Posterior cingulate gyrus (tissue), 11 donors: ENCODE measurements at regions of chr22 and their contacts with region 1.

Region 1: GRCh38 chr22:49999063-49999945 is 13.3 kb downstream of the IL17REL start:
- DNase-seq: peak in 2 of 10 donors; percentile 42 to 80

Region 2: GRCh38 chr22:49753961-49754695 is 245.2 kb before region 1 on chr22:
- intact Hi-C with region 1: no loop called
- DNase-seq: peak in 1 of 10 donors; percentile 65

Region 3: GRCh38 chr22:49790912-49791311 is 208.4 kb before region 1 on chr22:
- intact Hi-C with region 1: no loop called
- DNase-seq: peak in 1 of 10 donors; percentile 77

Region 4: DNA sequence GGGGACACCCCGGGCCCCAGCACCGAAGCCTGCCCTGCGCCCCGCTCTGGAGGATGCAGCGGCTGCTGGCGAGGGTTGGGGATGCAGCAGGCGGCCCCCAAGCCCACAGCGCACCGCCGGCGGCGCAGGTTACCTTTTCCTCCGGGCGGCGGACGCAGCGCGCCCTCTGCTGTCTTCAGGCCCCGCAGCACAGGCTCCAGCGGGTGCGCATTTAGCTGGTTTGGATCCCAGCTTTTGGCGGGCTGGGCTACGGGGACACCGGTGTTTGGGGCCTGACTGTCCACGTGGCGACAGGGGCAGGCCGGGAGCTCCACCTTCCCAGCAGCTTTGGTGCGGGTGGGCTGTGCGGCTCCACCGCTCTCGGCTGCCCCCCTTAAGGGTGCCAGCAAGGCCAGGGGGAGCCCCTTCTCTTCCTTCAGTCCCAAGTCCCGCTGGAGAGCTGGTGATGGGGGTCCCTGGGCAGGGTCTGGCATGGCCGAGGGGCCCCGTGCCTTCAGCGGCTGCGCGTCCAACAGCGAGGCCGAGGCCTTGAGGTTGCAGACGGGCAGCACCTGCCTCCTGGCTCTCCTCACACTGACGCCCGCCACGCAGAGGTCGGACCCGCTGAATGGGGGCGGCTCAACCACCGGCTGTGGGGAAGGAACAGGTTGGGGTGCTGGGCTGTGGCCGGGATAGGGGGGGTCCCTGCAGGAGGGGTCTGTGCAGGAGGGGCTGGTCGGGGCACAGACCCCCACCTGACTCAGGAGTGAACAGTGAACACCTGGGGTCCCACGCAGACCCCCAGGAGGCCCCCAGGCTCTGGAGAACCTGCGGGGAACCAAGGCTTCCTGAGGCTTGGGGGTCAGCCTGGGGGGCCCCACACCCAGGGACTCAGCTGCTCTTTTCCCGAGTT is 31.2 kb after region 1 on chr22:
- intact Hi-C with region 1: loop called (anchors 5 kb)
- DNase-seq: peak; percentile 39 to 96 (median 74)

Region 5: GRCh38 chr22:50048061-50048765 is 48.9 kb after region 1 on chr22:
- intact Hi-C with region 1: no loop called
- DNase-seq: peak in 2 of 10 donors; percentile 39 to 52